HepG2 (cell line): ENCODE measurements at regions of chr17 and their contacts with region 1.

Region 1: DNA sequence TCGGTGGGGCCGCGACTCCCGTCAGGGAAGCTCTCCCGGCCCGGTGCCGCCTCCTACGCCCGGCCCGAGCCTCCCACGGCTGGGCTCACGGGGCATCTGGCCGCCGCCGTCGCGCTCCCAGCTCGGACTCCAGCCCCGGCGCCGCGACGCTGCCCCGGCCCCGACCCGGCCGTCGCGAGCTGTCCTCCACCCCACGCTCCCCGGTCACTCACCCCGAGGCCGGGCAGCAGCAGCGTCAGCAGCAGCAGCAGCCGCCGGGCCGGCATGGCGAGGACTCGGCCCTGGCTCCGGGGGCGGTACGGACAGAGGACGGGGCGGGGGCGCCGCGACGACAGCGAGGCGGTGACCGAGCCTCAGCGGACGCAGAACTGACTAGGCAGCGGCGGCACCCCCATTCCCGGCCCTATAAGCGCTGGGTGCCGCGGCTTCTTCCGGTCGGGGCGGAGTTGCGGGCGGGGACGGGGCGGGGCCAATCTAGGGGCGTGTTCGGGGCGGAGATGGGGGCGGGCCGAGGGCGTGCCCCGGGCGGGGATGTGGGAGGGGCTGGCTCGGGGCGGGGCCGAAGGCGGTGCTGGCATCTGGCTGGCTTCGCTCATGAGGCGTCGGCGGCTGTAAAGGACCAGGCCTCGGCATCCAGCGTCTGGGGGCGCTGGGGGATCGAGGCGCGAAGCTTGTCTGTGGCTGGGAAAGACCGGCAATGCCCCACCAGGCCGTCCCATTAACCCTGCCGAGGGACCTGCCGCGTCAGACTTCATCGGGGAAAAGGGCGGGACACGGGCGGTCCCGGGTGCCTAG is at the start of gene ERN1:
- DNase-seq: peak; percentile 82
- ATAC-seq: peak; percentile 95
- H3K4me3 ChIP-seq: peak within 1 kb of the TSS; percentile 79 to 96 (median 89)
- H3K27ac ChIP-seq: peak within 1 kb of the TSS; percentile 81
- H3K4me1 ChIP-seq: peaks cover 84% of the 10 kb centered on the region
- H3K27me3 ChIP-seq: no peaks in the 10 kb centered on the region; a peak in 1 of 5 replicates
- CTCF ChIP-seq: peak; percentile 40
- EP300 ChIP-seq: 0 out of 4 replicates have a peak, but pooled peaks of 1 of the 2 experiments have one; percentile 6
- POLR2A ChIP-seq: peak; percentile 94 to 99
- RAD21 ChIP-seq: peak; percentile 62
- total RNA-seq, gene ERN1: 4.1 and 6.0 TPM in 2 replicates

Region 2: GRCh38 chr17:63929860-63930766 is 199.8 kb before region 1 on chr17:
- CTCF ChIA-PET with region 1: no interaction called
- POLR2A ChIA-PET with region 1: no interaction called
- in situ Hi-C with region 1: loop called (anchors 10 kb)
- intact Hi-C with region 1: no loop called
- DNase-seq: no peak
- ATAC-seq: peak; percentile 65
- H3K4me3 ChIP-seq: no peak overlapping the region; a peak in 1 of 6 replicates
- H3K27ac ChIP-seq: no peak overlapping the region
- H3K4me1 ChIP-seq: peaks cover 21% of the 10 kb centered on the region
- H3K27me3 ChIP-seq: peaks cover 19 to 81% of the 10 kb centered on the region in 2 experiments
- CTCF ChIP-seq: no peak
- EP300 ChIP-seq: no peak
- POLR2A ChIP-seq: no peak
- RAD21 ChIP-seq: no peak

Region 3: GRCh38 chr17:64063766-64064224 is 66.2 kb before region 1 on chr17:
- CTCF ChIA-PET with region 1: interaction called, 67 read pairs
- POLR2A ChIA-PET with region 1: interaction called, 24 read pairs
- in situ Hi-C with region 1: loop called (anchors 5 kb)
- intact Hi-C with region 1: loop called (anchors 1 kb)
- DNase-seq: peak; percentile 48
- ATAC-seq: peak; percentile 97
- H3K4me3 ChIP-seq: no peak overlapping the region
- H3K27ac ChIP-seq: no peak overlapping the region
- H3K4me1 ChIP-seq: peaks cover 15% of the 10 kb centered on the region
- H3K27me3 ChIP-seq: no peaks in the 10 kb centered on the region
- CTCF ChIP-seq: peak; percentile 94
- EP300 ChIP-seq: no peak
- POLR2A ChIP-seq: no peak
- RAD21 ChIP-seq: peak; percentile 92

Region 4: GRCh38 chr17:64081802-64082799 is 47.9 kb before region 1 on chr17:
- CTCF ChIA-PET with region 1: no interaction called
- POLR2A ChIA-PET with region 1: interaction called, 58 read pairs
- in situ Hi-C with region 1: no loop called
- intact Hi-C with region 1: loop called (anchors 1 kb)
- DNase-seq: peak; percentile 93
- ATAC-seq: peak; percentile 83
- H3K4me3 ChIP-seq: peak overlapping the region; percentile 3 to 39 (median 25); a peak in 4 of 6 replicates
- H3K27ac ChIP-seq: peak overlapping the region; percentile 84
- H3K4me1 ChIP-seq: peaks cover 85% of the 10 kb centered on the region
- H3K27me3 ChIP-seq: no peaks in the 10 kb centered on the region
- CTCF ChIP-seq: no peak; the same call in 1 of the 2 replicates
- EP300 ChIP-seq: peak in 1 of 2 experiments; percentile 98; a peak in 2 of 4 replicates
- POLR2A ChIP-seq: no peak
- RAD21 ChIP-seq: peak; percentile 28; the same call in 1 of the 2 replicates